Vagina (tissue), 2 donors: ENCODE measurements at regions of chrX and their contacts with region 1.

Region 1: DNA sequence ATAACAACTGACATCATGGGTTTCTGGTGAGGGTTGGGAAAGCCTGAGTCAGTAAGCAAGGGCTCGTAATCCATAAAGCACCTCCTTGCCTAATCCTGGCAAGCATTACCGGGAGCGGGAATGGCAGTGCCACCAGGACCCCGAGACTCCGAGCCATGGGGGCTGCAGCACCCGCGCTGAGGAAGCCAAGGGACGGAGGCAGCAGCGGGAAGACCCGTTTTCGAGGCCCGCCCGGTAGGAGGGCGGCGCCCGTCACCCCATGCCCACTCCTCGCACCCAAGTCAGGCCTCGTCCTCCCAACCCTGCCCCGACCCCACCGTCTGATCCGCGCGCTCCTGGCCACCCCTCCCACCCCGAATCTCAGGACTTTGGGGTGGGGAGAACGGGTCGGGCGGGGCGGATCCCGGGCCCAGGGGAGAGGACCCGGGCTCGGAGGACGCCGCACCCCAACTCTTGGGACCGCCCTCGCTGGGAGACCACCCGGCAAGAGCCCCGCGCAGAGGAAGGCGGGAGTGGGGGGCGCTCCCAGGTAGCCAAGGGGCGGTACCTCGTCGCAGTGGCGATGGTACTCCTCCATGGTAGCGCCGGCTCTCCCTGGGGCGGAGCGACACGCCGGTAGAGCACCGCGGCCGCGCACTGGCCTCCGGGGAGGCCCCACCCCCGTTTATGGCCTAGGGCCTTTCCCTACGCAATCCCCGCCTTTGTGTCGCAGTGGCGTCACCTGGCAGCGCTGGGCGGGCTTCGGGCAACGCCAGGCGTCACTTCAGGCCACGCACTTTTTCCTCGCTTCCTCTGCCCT is at the start of gene DYNLT3:
- DNase-seq: no peak
- H3K4me3 ChIP-seq: peak within 1 kb of the TSS; percentile 56 to 77
- H3K27ac ChIP-seq: peak within 1 kb of the TSS; percentile 83
- H3K4me1 ChIP-seq: peaks cover 7% of the 10 kb centered on the region
- H3K27me3 ChIP-seq: no peaks in the 10 kb centered on the region
- CTCF ChIP-seq: no peak
- POLR2A ChIP-seq: peak in 1 of 2 donors; percentile 71
- total RNA-seq, gene DYNLT3: 18.7 TPM

Region 2: GRCh38 chrX:38220024-38220414 is 372.9 kb after region 1 on chrX:
- intact Hi-C with region 1: loop called (anchors 5 kb)
- DNase-seq: no peak
- H3K4me3 ChIP-seq: peak overlapping the region; percentile 40 to 53
- H3K27ac ChIP-seq: no peak overlapping the region
- H3K4me1 ChIP-seq: no peaks in the 10 kb centered on the region
- H3K27me3 ChIP-seq: no peaks in the 10 kb centered on the region
- CTCF ChIP-seq: no peak
- POLR2A ChIP-seq: no peak